ENCODE measurements at regions of chr2 and their contacts with region 1.

Region 1: DNA sequence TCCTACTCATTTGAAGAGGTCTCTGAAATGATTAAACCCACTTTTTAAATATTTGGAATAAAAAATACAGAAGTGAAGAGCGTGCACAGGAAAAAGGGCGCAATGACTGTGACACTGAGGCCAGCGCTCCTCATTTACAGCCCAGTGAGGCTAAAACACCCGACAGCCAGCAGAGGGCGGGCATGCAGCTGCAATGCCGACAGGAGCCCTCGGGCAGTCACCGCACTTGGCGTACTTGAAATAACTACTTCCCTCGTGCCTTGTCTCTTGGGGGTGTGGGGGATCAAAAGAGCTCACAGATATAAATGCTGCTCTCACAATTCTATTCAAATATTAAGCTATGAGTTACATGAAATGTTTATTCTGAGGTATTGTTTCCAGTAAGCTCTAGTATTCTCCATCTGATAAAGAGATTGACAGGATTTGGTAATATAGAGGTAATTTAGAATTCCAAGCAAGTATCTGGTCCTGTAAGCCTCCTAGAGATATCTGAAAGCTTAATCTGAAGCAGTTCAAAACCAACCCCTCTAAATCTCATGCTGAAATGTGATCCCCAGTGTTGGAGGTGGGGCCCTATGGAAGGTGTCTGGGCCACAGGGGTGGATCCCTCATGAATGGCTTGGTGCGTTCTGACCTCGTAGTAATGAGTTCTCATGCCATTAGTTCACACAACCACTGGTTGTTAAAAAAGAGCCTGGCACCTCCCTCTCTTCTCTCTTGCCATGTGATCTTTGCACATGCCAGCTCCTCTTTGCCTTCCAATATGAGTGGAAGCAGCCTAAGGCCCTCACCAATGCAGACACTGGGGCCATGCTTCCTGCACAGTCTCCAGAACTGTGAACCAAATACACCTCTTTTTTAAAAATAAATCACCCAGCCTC is 93.6 kb downstream of the ZAP70 start:
- H3K4me3 Mint-ChIP-seq: no peak overlapping the region
- H3K27ac Mint-ChIP-seq: no peak overlapping the region
- H3K4me1 Mint-ChIP-seq: no peaks in the 10 kb centered on the region
- H3K27me3 Mint-ChIP-seq: no peaks in the 10 kb centered on the region

Region 2: GRCh38 chr2:97774425-97774824 is 32.6 kb before region 1 on chr2:
- intact Hi-C with region 1: no loop called
- H3K4me3 Mint-ChIP-seq: no peak overlapping the region
- H3K27ac Mint-ChIP-seq: no peak overlapping the region
- H3K4me1 Mint-ChIP-seq: no peaks in the 10 kb centered on the region
- H3K27me3 Mint-ChIP-seq: no peaks in the 10 kb centered on the region

Region 3: GRCh38 chr2:98269274-98269673 is 462.3 kb after region 1 on chr2:
- intact Hi-C with region 1: loop called (anchors 1 kb)
- H3K4me3 Mint-ChIP-seq: no peak overlapping the region
- H3K27ac Mint-ChIP-seq: no peak overlapping the region
- H3K4me1 Mint-ChIP-seq: no peaks in the 10 kb centered on the region
- H3K27me3 Mint-ChIP-seq: peaks cover 42% of the 10 kb centered on the region